B cell (primary cell): ENCODE measurements at regions of chr4 and their contacts with region 1.

Region 1: GRCh38 chr4:78691971-78692821 is 84.0 kb upstream of the BMP2K start:
- DNase-seq: peak; percentile 60
- ATAC-seq: peak; percentile 98
- H3K4me3 ChIP-seq: no peak overlapping the region
- H3K4me3 Mint-ChIP-seq: peak overlapping the region; percentile 5
- H3K27ac ChIP-seq: peak overlapping the region in 1 of 2 donors; percentile 26
- H3K27ac Mint-ChIP-seq: peak overlapping the region; percentile 3
- H3K4me1 ChIP-seq: peaks cover 17 to 19% of the 10 kb centered on the region in 2 donors
- H3K4me1 Mint-ChIP-seq: peaks cover 32% of the 10 kb centered on the region
- H3K27me3 ChIP-seq: no peaks in the 10 kb centered on the region
- H3K27me3 Mint-ChIP-seq: no peaks in the 10 kb centered on the region
- CTCF ChIP-seq: no peak

Region 2: GRCh38 chr4:77293436-77293835 is 1398.8 kb before region 1 on chr4:
- CTCF ChIA-PET with region 1: no interaction called
- POLR2A ChIA-PET with region 1: no interaction called
- intact Hi-C with region 1: no loop called
- DNase-seq: no peak
- ATAC-seq: no peak
- H3K4me3 ChIP-seq: no peak overlapping the region
- H3K4me3 Mint-ChIP-seq: no peak overlapping the region
- H3K27ac ChIP-seq: no peak overlapping the region
- H3K27ac Mint-ChIP-seq: no peak overlapping the region
- H3K4me1 ChIP-seq: no peaks in the 10 kb centered on the region
- H3K4me1 Mint-ChIP-seq: no peaks in the 10 kb centered on the region
- H3K27me3 ChIP-seq: no peaks in the 10 kb centered on the region
- H3K27me3 Mint-ChIP-seq: peaks cover 5% of the 10 kb centered on the region
- CTCF ChIP-seq: no peak

Region 3: DNA sequence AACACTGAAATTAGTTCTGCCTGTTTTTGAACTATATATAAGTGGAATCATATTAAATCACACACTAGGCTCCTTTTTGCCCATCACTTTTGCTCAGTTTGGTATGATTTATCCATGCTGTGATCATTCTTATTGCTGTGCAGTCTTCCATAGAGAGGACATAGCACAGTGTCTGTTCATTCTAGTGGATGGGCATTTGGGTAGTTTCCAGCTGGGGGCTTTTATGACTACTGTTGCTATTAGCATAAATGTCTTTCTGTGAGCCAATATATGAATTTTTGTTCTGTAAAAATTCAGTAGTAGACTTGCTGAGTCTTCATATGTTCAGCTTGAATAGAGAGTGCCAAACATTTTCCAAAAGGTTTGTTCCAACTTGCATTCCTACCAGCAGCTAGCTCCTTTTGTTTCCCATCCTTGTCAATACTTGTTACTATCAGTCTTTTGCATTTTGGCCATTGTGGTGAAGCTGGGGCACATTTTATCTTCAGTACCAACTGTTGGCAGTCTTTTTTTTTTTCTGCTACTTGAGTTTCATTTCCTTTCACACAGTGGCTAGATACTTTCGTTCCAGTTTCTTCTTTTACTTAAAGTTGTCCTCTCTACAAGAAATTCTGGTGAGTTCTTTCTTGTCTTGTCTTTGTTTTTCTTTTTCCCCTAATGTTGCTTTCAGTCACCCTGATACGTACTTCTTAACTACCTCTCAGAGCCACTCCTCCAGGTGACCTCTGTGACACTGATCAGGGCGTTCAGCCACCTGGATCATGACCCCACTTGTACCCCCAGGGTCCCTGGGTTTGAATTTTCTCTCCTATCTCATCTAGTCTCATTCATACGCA is 53.6 kb before region 1 on chr4:
- CTCF ChIA-PET with region 1: no interaction called
- POLR2A ChIA-PET with region 1: no interaction called
- intact Hi-C with region 1: no loop called
- DNase-seq: peak; percentile 73
- ATAC-seq: peak; percentile 73
- H3K4me3 ChIP-seq: peak overlapping the region in 3 of 5 experiments; percentile 9 to 48 (median 35)
- H3K4me3 Mint-ChIP-seq: peak overlapping the region; percentile 78
- H3K27ac ChIP-seq: peak overlapping the region; percentile 87 to 94
- H3K27ac Mint-ChIP-seq: peak overlapping the region; percentile 98
- H3K4me1 ChIP-seq: peaks cover 62 to 69% of the 10 kb centered on the region in 2 donors
- H3K4me1 Mint-ChIP-seq: peaks cover 71% of the 10 kb centered on the region
- H3K27me3 ChIP-seq: no peaks in the 10 kb centered on the region
- H3K27me3 Mint-ChIP-seq: no peaks in the 10 kb centered on the region
- CTCF ChIP-seq: no peak

Region 4: DNA sequence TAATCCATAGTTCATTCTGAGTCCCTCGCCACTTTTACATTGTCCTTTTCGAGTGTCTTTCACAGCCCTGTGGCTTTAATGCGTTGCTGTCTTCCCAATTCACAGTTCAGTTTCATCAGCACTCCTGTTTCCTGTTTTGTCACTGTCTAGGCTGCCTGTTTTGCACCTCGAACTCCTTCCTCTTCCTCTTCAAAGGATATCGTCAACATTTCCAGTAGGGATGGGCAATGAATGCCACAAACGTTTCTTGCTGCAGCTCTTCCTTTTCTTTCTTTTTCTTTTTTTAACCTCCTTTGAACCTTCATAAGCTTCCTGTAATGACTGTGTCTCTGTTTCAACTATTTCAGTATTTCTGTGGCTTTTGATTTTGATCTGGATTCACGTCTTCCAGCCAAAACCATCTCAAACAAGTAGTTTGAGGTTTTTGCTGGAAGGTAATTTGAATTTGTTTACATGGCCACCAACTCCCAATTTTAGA is 35.2 kb before region 1 on chr4:
- CTCF ChIA-PET with region 1: interaction called, 3 read pairs
- POLR2A ChIA-PET with region 1: no interaction called
- intact Hi-C with region 1: loop called (anchors 5 kb)
- DNase-seq: no peak
- ATAC-seq: no peak
- H3K4me3 ChIP-seq: peak overlapping the region in 4 of 5 experiments; percentile 8 to 52 (median 29)
- H3K4me3 Mint-ChIP-seq: peak overlapping the region; percentile 72
- H3K27ac ChIP-seq: peak overlapping the region; percentile 47 to 76
- H3K27ac Mint-ChIP-seq: peak overlapping the region; percentile 67
- H3K4me1 ChIP-seq: peaks cover 38 to 43% of the 10 kb centered on the region in 2 donors
- H3K4me1 Mint-ChIP-seq: peaks cover 45% of the 10 kb centered on the region
- H3K27me3 ChIP-seq: no peaks in the 10 kb centered on the region
- H3K27me3 Mint-ChIP-seq: no peaks in the 10 kb centered on the region
- CTCF ChIP-seq: no peak

Region 5: GRCh38 chr4:78704981-78705683 is 12.9 kb after region 1 on chr4:
- CTCF ChIA-PET with region 1: interaction called, 4 read pairs
- POLR2A ChIA-PET with region 1: no interaction called
- intact Hi-C with region 1: loop called (anchors 2 kb)
- DNase-seq: no peak
- ATAC-seq: no peak
- H3K4me3 ChIP-seq: no peak overlapping the region
- H3K4me3 Mint-ChIP-seq: no peak overlapping the region
- H3K27ac ChIP-seq: peak overlapping the region in 1 of 2 donors; percentile 21
- H3K27ac Mint-ChIP-seq: peak overlapping the region; percentile 72
- H3K4me1 ChIP-seq: peaks cover 22 to 34% of the 10 kb centered on the region in 2 donors
- H3K4me1 Mint-ChIP-seq: peaks cover 46% of the 10 kb centered on the region
- H3K27me3 ChIP-seq: no peaks in the 10 kb centered on the region
- H3K27me3 Mint-ChIP-seq: no peaks in the 10 kb centered on the region
- CTCF ChIP-seq: no peak

Region 6: DNA sequence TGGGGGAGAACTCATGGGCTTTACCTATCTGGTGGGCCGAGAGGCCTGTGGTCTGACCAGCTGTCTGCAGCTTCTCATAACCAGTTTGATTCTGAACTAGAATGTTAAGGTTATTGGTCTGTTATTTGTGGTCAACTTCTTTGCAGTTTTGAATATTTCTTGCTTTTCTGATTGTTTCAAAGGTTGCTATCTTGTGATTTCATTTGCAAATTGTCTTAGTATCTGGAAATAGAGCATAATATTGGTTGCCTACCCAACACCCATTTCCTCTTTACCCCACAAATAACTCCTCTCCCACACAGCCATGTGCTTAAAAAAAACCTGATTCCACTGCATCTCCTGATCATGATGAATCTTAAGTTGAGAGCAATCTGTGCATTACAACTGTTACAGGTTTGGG is 44.8 kb after region 1 on chr4:
- CTCF ChIA-PET with region 1: interaction called, 3 read pairs
- POLR2A ChIA-PET with region 1: no interaction called
- intact Hi-C with region 1: loop called (anchors 5 kb)
- DNase-seq: no peak
- ATAC-seq: peak; percentile 32
- H3K4me3 ChIP-seq: no peak overlapping the region
- H3K4me3 Mint-ChIP-seq: peak overlapping the region; percentile 16
- H3K27ac ChIP-seq: peak overlapping the region; percentile 24 to 67
- H3K27ac Mint-ChIP-seq: peak overlapping the region; percentile 90
- H3K4me1 ChIP-seq: peaks cover 41 to 49% of the 10 kb centered on the region in 2 donors
- H3K4me1 Mint-ChIP-seq: peaks cover 60% of the 10 kb centered on the region
- H3K27me3 ChIP-seq: no peaks in the 10 kb centered on the region
- H3K27me3 Mint-ChIP-seq: no peaks in the 10 kb centered on the region
- CTCF ChIP-seq: no peak